ENCODE measurements at regions of chr7 and their contacts with region 1.

Region 1: GRCh38 chr7:117212969-117213877 is 109.6 kb downstream of the WNT2 start:
- DNase-seq: peak; percentile 34 to 70
- H3K4me3 ChIP-seq: no peak overlapping the region
- H3K27ac ChIP-seq: no peak overlapping the region
- H3K4me1 ChIP-seq: no peaks in the 10 kb centered on the region; a peak in 1 of 7 replicates
- H3K27me3 ChIP-seq: no peaks in the 10 kb centered on the region
- CTCF ChIP-seq: peak; percentile 76 to 88 (median 82)
- EP300 ChIP-seq: no peak
- POLR2A ChIP-seq: no peak
- RAD21 ChIP-seq: peak; percentile 85 to 86

Region 2: GRCh38 chr7:117186218-117187010 is 26.8 kb before region 1 on chr7:
- CTCF ChIA-PET with region 1: no interaction called
- POLR2A ChIA-PET with region 1: no interaction called
- DNase-seq: no peak
- H3K4me3 ChIP-seq: no peak overlapping the region
- H3K27ac ChIP-seq: no peak overlapping the region
- H3K4me1 ChIP-seq: no peaks in the 10 kb centered on the region
- H3K27me3 ChIP-seq: no peaks in the 10 kb centered on the region
- CTCF ChIP-seq: no peak
- EP300 ChIP-seq: no peak
- POLR2A ChIP-seq: no peak
- RAD21 ChIP-seq: no peak

Region 3: DNA sequence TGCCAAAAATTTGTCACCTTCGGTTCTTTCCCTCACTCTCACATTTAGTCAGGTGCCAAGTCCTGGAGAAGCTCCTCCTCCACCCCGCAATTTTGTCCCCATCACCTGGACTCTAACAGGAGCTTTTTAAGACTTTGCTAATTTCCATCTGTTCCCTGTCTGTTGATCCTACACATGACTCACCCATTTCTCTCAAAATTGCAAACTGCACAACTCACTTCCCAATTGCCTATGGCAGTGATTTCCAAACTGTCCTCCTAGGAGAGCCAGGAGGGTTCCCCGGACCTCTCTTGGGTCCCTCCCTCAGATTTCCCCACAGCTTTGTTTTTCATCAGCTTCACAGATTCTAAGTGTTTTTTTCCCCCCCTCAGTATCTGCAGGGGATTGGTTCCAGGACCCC is 10.7 kb before region 1 on chr7:
- CTCF ChIA-PET with region 1: interaction called, 20 read pairs
- POLR2A ChIA-PET with region 1: interaction called, 4 read pairs
- DNase-seq: no peak
- H3K4me3 ChIP-seq: no peak overlapping the region
- H3K27ac ChIP-seq: no peak overlapping the region
- H3K4me1 ChIP-seq: peaks cover 0 to 4% (median 2%) of the 10 kb centered on the region in 4 experiments; a peak in 3 of 7 replicates
- H3K27me3 ChIP-seq: no peaks in the 10 kb centered on the region
- CTCF ChIP-seq: no peak
- EP300 ChIP-seq: no peak
- POLR2A ChIP-seq: no peak
- RAD21 ChIP-seq: no peak

Region 4: DNA sequence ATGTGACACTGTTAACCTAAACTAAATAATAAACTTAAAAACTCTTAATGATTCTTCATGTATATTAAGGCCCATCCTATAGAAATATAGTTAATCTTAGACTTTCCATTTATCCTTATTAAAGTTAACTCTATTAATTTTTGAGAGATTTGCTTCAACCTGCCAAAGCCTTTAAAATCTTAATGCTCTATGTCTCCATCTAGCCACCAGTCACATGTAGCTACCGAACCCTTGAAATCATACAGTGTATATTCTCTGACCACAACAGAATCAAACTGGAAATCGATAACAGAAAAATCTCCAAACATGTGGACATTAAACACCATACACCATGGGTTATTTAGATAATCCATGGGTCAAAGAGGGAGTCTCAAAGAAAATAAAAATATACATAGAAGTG is 162.2 kb after region 1 on chr7:
- CTCF ChIA-PET with region 1: interaction called, 18 read pairs
- POLR2A ChIA-PET with region 1: no interaction called
- DNase-seq: no peak
- H3K4me3 ChIP-seq: no peak overlapping the region
- H3K27ac ChIP-seq: no peak overlapping the region
- H3K4me1 ChIP-seq: no peaks in the 10 kb centered on the region
- H3K27me3 ChIP-seq: no peaks in the 10 kb centered on the region
- CTCF ChIP-seq: peak in 1 of 3 experiments; percentile 6; a peak in 1 of 4 replicates
- EP300 ChIP-seq: no peak
- POLR2A ChIP-seq: no peak
- RAD21 ChIP-seq: peak in 1 of 2 experiments; percentile 25; a peak in 1 of 4 replicates

Measured in H1 (cell line).